Heart left ventricle (tissue), 16 donors: ENCODE measurements at regions of chr11 and their contacts with region 1.

Region 1: DNA sequence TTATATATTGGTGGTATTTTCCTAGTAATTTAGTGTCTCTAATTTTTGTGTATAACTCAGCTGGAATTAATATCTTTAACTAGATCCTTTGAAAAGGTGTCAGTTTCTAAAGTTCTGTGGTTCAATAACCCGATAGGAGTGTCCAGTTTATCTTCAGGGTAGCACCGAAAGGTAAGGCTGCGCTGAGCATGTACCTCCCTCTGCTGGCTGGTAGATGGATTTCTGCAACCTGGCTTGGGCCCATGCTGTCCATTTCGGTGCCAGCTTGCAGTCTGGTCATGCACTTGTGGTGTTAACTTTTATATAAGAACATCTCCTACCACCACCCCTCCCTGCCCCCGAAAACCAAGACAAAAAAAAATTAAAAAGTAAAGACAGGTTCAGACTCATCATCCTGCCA is 24.7 kb downstream of the EXT2 start:
- DNase-seq: peak in 4 of 5 donors; percentile 23 to 39 (median 36)
- ATAC-seq: peak; percentile 48 to 82 (median 74)
- H3K4me3 ChIP-seq: no peak overlapping the region
- H3K27ac ChIP-seq: no peak overlapping the region
- H3K4me1 ChIP-seq: peaks cover 5 to 37% (median 21%) of the 10 kb centered on the region in 12 donors
- H3K27me3 ChIP-seq: no peaks in the 10 kb centered on the region
- CTCF ChIP-seq: peak in 11 of 12 donors; percentile 33 to 66 (median 52)
- POLR2A ChIP-seq: no peak

Region 2: GRCh38 chr11:43852057-43852636 is 268.0 kb before region 1 on chr11:
- intact Hi-C with region 1: no loop called
- DNase-seq: peak in 4 of 5 donors; percentile 21 to 34 (median 32)
- ATAC-seq: peak; percentile 51 to 72 (median 66)
- H3K4me3 ChIP-seq: no peak overlapping the region
- H3K27ac ChIP-seq: no peak overlapping the region
- H3K4me1 ChIP-seq: no peaks in the 10 kb centered on the region
- H3K27me3 ChIP-seq: no peaks in the 10 kb centered on the region
- CTCF ChIP-seq: peak; percentile 67 to 83 (median 72)
- POLR2A ChIP-seq: no peak

Region 3: DNA sequence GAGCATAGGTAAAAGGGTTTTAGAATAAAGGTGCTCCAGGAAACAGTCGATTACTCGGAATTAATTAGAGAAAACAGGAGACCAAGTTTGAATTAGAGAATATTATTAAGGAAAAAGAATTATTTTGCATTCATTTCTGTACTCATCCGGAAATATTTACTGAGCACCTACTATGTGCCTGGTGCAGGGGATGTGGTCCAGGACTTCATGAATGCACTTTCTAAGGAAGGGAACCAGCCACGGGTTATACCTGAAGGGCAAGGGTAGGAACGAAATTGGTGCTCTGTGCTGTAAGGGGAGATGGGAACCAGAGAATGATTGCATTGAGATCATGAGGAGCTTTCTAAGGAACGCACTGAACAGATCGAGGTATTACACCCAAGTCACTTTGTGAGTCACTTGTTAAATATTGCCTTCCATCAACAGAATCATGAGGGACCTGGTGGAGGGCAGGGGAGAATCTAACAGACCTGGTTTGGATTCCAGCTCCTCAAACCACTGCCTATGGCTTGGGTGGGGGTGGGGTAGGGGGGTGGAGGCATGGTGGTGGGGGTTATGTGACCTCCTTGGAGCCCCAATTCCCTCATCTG is 136.9 kb before region 1 on chr11:
- intact Hi-C with region 1: no loop called
- DNase-seq: no peak
- ATAC-seq: no peak
- H3K4me3 ChIP-seq: no peak overlapping the region
- H3K27ac ChIP-seq: no peak overlapping the region
- H3K4me1 ChIP-seq: peaks cover 7 to 48% (median 33%) of the 10 kb centered on the region in 12 donors
- H3K27me3 ChIP-seq: no peaks in the 10 kb centered on the region
- CTCF ChIP-seq: no peak
- POLR2A ChIP-seq: no peak

Region 4: DNA sequence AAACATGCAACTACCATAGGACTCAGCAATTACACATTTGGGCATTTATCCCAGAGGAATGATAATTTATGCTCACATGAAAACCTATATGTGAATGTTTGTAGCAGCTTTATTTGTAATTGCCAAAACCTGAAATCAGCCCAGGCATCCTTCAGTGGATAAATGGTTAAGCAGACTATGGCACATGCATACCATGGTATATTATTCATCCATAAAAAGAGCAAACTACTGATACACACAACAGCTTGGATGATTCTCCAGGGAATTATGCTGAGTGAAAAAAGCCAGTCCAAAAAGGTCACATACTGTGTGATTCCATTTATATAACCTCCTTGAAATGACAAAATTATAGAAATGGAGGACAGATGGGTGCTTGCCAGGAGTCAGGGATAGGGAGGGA is 103.1 kb after region 1 on chr11:
- intact Hi-C with region 1: no loop called
- DNase-seq: peak in 1 of 5 donors; percentile 19
- ATAC-seq: peak in 1 of 4 donors; percentile 21
- H3K4me3 ChIP-seq: no peak overlapping the region
- H3K27ac ChIP-seq: no peak overlapping the region
- H3K4me1 ChIP-seq: peaks cover 0 to 31% (median 0%) of the 10 kb centered on the region in 12 donors
- H3K27me3 ChIP-seq: no peaks in the 10 kb centered on the region
- CTCF ChIP-seq: no peak
- POLR2A ChIP-seq: no peak

Region 5: DNA sequence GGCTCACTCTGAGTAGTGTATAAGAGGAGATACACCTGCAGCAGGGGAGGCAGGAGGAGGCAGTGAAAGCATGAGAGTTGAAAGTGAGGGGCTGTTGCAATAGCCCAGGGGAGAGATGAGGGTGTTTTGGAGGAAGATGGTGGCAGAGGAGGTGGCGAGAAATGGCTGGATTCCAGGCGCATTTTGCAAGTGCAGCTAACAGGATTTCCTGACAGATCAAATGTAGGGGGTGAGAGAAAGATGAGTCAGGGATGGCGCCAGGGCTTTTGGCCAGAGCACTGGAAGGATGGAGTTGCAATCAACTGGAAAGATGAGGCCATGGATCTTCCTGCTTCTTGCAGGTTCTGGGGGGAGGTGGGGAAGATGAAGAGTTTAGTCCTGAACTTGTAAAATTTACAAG is 589.8 kb after region 1 on chr11:
- intact Hi-C with region 1: loop called in 1 of 10 experiments (anchors 10 kb)
- DNase-seq: no peak
- ATAC-seq: no peak
- H3K4me3 ChIP-seq: no peak overlapping the region
- H3K27ac ChIP-seq: no peak overlapping the region
- H3K4me1 ChIP-seq: peaks cover 0 to 7% (median 0%) of the 10 kb centered on the region in 12 donors
- H3K27me3 ChIP-seq: no peaks in the 10 kb centered on the region
- CTCF ChIP-seq: no peak
- POLR2A ChIP-seq: no peak